ENCODE measurements at regions of chr4 and their contacts with region 1.

Region 1: GRCh38 chr4:2441393-2442174 is 22.8 kb downstream of the CFAP99 start:
- DNase-seq: peak; percentile 35
- ATAC-seq: peak; percentile 99
- H3K4me3 ChIP-seq: no peak overlapping the region
- H3K27ac ChIP-seq: no peak overlapping the region
- H3K4me1 ChIP-seq: peaks cover 3% of the 10 kb centered on the region; the same call in 1 of the 2 replicates
- H3K27me3 ChIP-seq: peaks cover 0 to 1% of the 10 kb centered on the region in 2 experiments; a peak in 2 of 4 replicates
- CTCF ChIP-seq: peak; percentile 91 to 99 (median 95)
- EP300 ChIP-seq: no peak
- POLR2A ChIP-seq: no peak
- RAD21 ChIP-seq: peak; percentile 83

Region 2: GRCh38 chr4:2241410-2242353 is 199.9 kb before region 1 on chr4 and contains the starts of genes HAUS3 and POLN:
- CTCF ChIA-PET with region 1: interaction called, 4 read pairs
- POLR2A ChIA-PET with region 1: no interaction called
- RAD21 ChIA-PET with region 1: interaction called, 6 read pairs
- SMC1A ChIA-PET with region 1: interaction called, 7 read pairs
- in situ Hi-C with region 1: no loop called
- intact Hi-C with region 1: loop called (anchors 5 kb)
- DNase-seq: peak; percentile 94
- ATAC-seq: peak; percentile 95
- H3K4me3 ChIP-seq: peak within 1 kb of the TSS; percentile 78
- H3K27ac ChIP-seq: peak within 1 kb of the TSS; percentile 70
- H3K4me1 ChIP-seq: peaks cover 6% of the 10 kb centered on the region; the same call in 1 of the 2 replicates
- H3K27me3 ChIP-seq: no peaks in the 10 kb centered on the region
- CTCF ChIP-seq: no peak
- EP300 ChIP-seq: no peak
- POLR2A ChIP-seq: peak; percentile 92
- RAD21 ChIP-seq: no peak
- polyA plus RNA-seq, gene HAUS3: 4.2 to 7.3 TPM
- polyA plus RNA-seq, gene POLN: 0.09 TPM in 1 of 2 experiments, not detected in the other

Region 3: GRCh38 chr4:2418650-2419571 is 22.7 kb before region 1 on chr4 and contains the start of gene CFAP99:
- CTCF ChIA-PET with region 1: interaction called, 13 read pairs
- POLR2A ChIA-PET with region 1: no interaction called
- RAD21 ChIA-PET with region 1: no interaction called
- SMC1A ChIA-PET with region 1: no interaction called
- in situ Hi-C with region 1: no loop called
- intact Hi-C with region 1: no loop called
- DNase-seq: peak; percentile 72
- ATAC-seq: peak; percentile 93
- H3K4me3 ChIP-seq: peak within 1 kb of the TSS; percentile 67
- H3K27ac ChIP-seq: no peak within 1 kb of the TSS
- H3K4me1 ChIP-seq: peaks cover 23% of the 10 kb centered on the region
- H3K27me3 ChIP-seq: peaks cover 12 to 22% of the 10 kb centered on the region in 2 experiments
- CTCF ChIP-seq: peak in 1 of 3 experiments; percentile 31; a peak in 2 of 6 replicates
- EP300 ChIP-seq: no peak
- POLR2A ChIP-seq: no peak
- RAD21 ChIP-seq: no peak
- polyA plus RNA-seq, gene CFAP99: not detected

Region 4: GRCh38 chr4:2462218-2462991 is 20.8 kb after region 1 on chr4:
- CTCF ChIA-PET with region 1: interaction called, 10 read pairs
- POLR2A ChIA-PET with region 1: no interaction called
- RAD21 ChIA-PET with region 1: no interaction called
- SMC1A ChIA-PET with region 1: interaction called, 3 read pairs
- in situ Hi-C with region 1: no loop called
- intact Hi-C with region 1: no loop called
- DNase-seq: no peak
- ATAC-seq: peak; percentile 97
- H3K4me3 ChIP-seq: peak overlapping the region; percentile 60; the same call in 1 of the 2 replicates
- H3K27ac ChIP-seq: no peak overlapping the region
- H3K4me1 ChIP-seq: peaks cover 4% of the 10 kb centered on the region
- H3K27me3 ChIP-seq: no peaks in the 10 kb centered on the region; a peak in 2 of 4 replicates
- CTCF ChIP-seq: peak; percentile 21 to 57 (median 41); a peak in 3 of 6 replicates
- EP300 ChIP-seq: no peak
- POLR2A ChIP-seq: no peak
- RAD21 ChIP-seq: peak; percentile 29; the same call in 1 of the 2 replicates

Region 5: DNA sequence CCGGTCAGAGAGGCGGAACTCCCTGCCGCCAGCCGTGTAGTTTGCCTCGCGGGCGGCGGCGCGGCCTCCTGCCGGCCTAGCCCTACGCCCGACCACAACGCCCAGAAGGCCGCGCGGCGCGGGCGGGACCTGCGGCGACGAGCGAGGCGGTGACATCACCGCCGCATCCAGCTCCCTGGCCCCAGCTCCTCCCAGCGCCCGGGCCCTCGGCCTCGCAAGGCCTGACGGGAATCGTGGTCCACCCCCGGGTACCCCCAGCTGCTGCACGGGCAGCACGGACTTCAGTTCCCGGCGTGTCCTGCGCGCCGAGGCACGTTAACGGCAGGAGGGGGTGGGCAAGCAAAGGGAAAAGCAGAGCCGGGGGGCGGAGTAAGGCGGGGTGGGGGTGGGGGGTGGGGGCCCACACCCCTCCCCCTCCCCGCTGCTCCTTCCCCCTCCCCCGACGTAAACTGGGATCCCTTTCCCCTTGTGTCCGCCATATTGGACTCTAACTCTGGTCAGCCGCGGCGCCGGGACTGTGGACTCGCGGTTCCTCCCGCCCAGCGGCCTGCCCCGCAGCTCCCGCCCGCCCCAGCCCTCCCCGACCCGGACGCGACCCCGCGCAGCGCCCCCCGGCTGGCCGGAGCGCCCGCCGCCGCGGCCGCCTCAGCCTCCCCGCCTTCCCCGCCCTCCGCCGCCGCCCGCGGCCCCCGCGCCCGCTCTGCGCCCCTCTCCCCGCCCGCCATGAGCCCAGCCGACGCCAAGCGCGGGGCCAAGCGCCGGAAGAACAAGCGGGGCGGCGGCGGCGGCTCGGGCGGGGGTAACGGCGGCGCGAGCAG is 94.8 kb after region 1 on chr4 and contains the start of gene FAM193A:
- CTCF ChIA-PET with region 1: interaction called, 12 read pairs
- POLR2A ChIA-PET with region 1: no interaction called
- RAD21 ChIA-PET with region 1: interaction called, 8 read pairs
- SMC1A ChIA-PET with region 1: interaction called, 3 read pairs
- in situ Hi-C with region 1: no loop called
- intact Hi-C with region 1: no loop called
- DNase-seq: peak; percentile 94
- ATAC-seq: peak; percentile 96
- H3K4me3 ChIP-seq: peak within 1 kb of the TSS; percentile 95
- H3K27ac ChIP-seq: peak within 1 kb of the TSS; percentile 83
- H3K4me1 ChIP-seq: peaks cover 8% of the 10 kb centered on the region
- H3K27me3 ChIP-seq: no peaks in the 10 kb centered on the region
- CTCF ChIP-seq: no peak
- EP300 ChIP-seq: 0 out of 4 replicates have a peak, but pooled peaks of 1 of the 2 experiments have one; percentile 49
- POLR2A ChIP-seq: peak; percentile 81
- RAD21 ChIP-seq: no peak
- polyA plus RNA-seq, gene FAM193A: 0.52 to 0.91 TPM

Region 6: DNA sequence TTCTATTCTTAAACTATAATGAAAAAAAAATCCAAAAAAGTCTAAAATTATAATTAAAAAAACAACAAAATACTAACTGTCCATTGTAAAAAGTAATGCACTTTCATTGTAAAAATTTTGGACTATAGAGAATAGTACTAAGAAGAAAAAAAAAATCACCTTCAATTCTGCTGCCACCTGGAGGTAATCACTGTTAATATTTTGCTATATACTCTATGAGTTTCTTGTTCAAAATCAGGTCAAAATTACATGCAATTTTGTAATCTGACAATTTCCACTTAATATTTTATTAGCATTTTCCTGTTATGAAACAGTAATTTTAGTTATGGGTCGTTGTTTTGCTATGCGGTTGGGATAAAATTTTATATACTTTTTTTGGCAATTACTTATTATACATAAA is 694.9 kb after region 1 on chr4:
- CTCF ChIA-PET with region 1: no interaction called
- POLR2A ChIA-PET with region 1: no interaction called
- RAD21 ChIA-PET with region 1: no interaction called
- SMC1A ChIA-PET with region 1: no interaction called
- in situ Hi-C with region 1: no loop called
- intact Hi-C with region 1: no loop called
- DNase-seq: no peak
- ATAC-seq: no peak
- H3K4me3 ChIP-seq: no peak overlapping the region
- H3K27ac ChIP-seq: no peak overlapping the region
- H3K4me1 ChIP-seq: no peaks in the 10 kb centered on the region
- H3K27me3 ChIP-seq: no peaks in the 10 kb centered on the region
- CTCF ChIP-seq: peak in 1 of 3 experiments; percentile 19; a peak in 2 of 6 replicates
- EP300 ChIP-seq: no peak
- POLR2A ChIP-seq: no peak
- RAD21 ChIP-seq: no peak

Measured in GM12878 (cell line).